ENCODE measurements at regions of chr10 and their contacts with region 1.

Region 1: GRCh38 chr10:127906548-127907377 is at the start of gene PTPRE:
- DNase-seq: peak in 34 of 35 experiments; percentile 18 to 74 (median 48)
- ATAC-seq: peak; percentile 92 to 99 (median 96)
- H3K4me3 ChIP-seq: peak within 1 kb of the TSS in 1 of 2 donors; percentile 57
- H3K4me3 Mint-ChIP-seq: peak within 1 kb of the TSS; percentile 34 to 50 (median 49)
- H3K27ac ChIP-seq: no peak within 1 kb of the TSS
- H3K27ac Mint-ChIP-seq: no peak within 1 kb of the TSS
- H3K4me1 ChIP-seq: peaks cover 0 to 9% of the 10 kb centered on the region in 2 experiments
- H3K4me1 Mint-ChIP-seq: no peaks in the 10 kb centered on the region
- H3K27me3 ChIP-seq: peaks cover 0 to 42% of the 10 kb centered on the region in 2 experiments
- H3K27me3 Mint-ChIP-seq: peaks cover 20 to 42% of the 10 kb centered on the region in 2 donors
- total RNA-seq, gene PTPRE: 23.2 to 69.2 (median 32.2) TPM

Region 2: DNA sequence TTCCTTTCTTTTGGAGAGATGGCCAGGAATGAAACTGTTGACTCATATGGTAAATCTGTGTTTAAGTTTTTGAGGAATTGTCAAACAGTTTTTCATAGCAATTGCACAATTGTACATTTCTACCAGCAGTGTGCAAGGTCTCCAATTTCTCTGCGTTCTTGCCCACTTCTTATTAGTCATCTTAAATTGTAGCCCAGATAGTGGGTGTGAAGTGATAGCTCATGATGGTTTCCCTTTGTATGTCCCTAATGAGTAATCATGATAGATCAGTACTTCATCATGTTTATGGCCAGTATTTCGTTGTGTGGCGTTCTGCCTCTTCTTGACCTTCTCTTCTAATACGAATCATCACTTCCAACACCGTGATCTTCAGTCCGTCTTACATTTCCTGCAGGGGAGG is 865.2 kb before region 1 on chr10:
- CTCF ChIA-PET with region 1: no interaction called
- POLR2A ChIA-PET with region 1: no interaction called
- DNase-seq: no peak
- ATAC-seq: no peak
- H3K4me3 ChIP-seq: no peak overlapping the region
- H3K4me3 Mint-ChIP-seq: no peak overlapping the region
- H3K27ac ChIP-seq: no peak overlapping the region
- H3K27ac Mint-ChIP-seq: no peak overlapping the region
- H3K4me1 ChIP-seq: no peaks in the 10 kb centered on the region
- H3K4me1 Mint-ChIP-seq: no peaks in the 10 kb centered on the region
- H3K27me3 ChIP-seq: no peaks in the 10 kb centered on the region
- H3K27me3 Mint-ChIP-seq: no peaks in the 10 kb centered on the region

Region 3: DNA sequence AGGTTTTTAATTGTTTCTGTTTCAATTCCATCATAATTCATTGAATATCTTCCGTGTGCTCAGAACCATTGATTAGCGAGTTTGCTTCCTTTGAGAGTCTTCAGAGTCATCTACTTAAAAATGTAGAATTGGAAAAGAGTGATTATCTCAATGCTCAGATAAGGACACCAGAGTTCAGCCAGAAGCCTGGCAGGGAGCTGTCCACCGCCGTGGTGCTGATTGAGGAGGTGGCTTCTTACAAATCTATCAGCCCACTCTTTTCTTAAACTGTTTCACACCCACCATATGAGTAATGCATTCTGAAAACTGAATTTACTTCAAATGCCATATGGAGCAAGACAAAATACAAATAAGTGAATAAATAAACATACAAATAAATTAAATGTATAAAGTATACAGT is 789.6 kb before region 1 on chr10:
- CTCF ChIA-PET with region 1: no interaction called
- POLR2A ChIA-PET with region 1: no interaction called
- DNase-seq: peak in 10 of 35 experiments; percentile 1 to 27 (median 10)
- ATAC-seq: no peak
- H3K4me3 ChIP-seq: no peak overlapping the region
- H3K4me3 Mint-ChIP-seq: no peak overlapping the region
- H3K27ac ChIP-seq: no peak overlapping the region
- H3K27ac Mint-ChIP-seq: no peak overlapping the region
- H3K4me1 ChIP-seq: peaks cover 0 to 3% of the 10 kb centered on the region in 2 experiments
- H3K4me1 Mint-ChIP-seq: no peaks in the 10 kb centered on the region
- H3K27me3 ChIP-seq: peaks cover 0 to 2% of the 10 kb centered on the region in 2 experiments
- H3K27me3 Mint-ChIP-seq: peaks cover 0 to 15% of the 10 kb centered on the region in 2 donors

Region 4: DNA sequence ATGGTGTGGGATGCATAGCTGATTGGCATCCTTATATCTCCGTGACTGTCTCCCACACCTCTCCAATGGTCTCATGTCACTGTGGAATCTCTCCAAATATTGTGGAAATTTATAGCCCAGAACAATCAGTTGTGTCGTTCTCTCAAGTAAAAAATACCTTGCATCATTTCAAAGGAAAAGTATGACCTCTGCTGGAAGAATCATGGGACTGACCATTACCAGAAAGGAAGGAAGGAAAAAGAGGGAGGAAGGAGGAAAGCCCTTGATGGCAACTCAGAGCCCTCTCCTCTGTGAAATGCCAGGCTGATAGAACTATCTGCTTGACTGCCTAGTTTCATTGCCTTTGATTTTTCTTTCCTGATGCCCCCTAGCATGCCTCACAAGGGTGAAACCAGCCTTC is 93.5 kb before region 1 on chr10:
- CTCF ChIA-PET with region 1: no interaction called
- POLR2A ChIA-PET with region 1: no interaction called
- DNase-seq: no peak
- ATAC-seq: no peak
- H3K4me3 ChIP-seq: no peak overlapping the region
- H3K4me3 Mint-ChIP-seq: no peak overlapping the region
- H3K27ac ChIP-seq: no peak overlapping the region
- H3K27ac Mint-ChIP-seq: no peak overlapping the region
- H3K4me1 ChIP-seq: no peaks in the 10 kb centered on the region
- H3K4me1 Mint-ChIP-seq: no peaks in the 10 kb centered on the region
- H3K27me3 ChIP-seq: no peaks in the 10 kb centered on the region
- H3K27me3 Mint-ChIP-seq: peaks cover 0 to 12% of the 10 kb centered on the region in 2 donors

Region 5: DNA sequence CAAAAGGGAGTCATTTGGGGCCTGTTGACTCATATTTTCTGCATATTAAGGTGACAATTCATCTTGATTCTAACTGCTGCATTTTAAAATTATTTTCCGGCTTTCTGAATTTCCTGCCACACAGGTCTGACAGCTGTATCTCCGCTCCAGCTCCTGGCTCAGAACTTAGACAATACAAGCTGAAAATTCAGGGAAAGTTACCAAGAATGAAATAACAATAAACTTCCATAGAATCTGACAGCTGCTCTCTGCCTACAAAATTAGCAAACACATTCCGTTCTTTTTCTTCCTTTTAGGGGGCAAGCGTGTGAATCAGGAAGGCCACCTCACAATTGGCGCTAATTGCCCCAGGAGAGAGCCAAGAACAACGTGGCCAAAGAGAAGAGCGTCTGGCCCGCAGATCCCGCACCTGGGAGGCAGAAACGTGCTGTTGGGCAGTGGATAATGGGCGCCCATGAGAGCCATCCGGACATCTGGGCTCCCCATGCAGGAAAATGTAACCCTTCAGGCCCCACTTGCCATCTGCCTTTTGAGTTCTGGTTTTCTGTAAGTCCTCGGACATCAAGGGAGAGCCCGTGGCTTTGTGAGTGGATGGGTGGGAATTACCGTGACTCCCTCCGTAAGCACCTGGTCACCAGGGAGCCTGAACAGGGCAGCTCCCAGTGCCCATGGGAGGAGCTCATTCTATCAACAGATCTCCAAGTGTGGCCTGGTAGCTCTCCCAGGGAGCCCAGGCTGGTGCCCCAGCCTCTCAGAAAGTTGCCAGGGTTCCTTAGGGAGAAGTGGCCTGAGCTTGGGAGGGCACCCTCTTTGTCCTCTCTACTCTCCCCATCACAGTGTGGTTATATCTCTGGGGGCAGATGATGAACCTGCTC is 19.0 kb before region 1 on chr10:
- CTCF ChIA-PET with region 1: no interaction called
- POLR2A ChIA-PET with region 1: no interaction called
- DNase-seq: no peak
- ATAC-seq: no peak
- H3K4me3 ChIP-seq: no peak overlapping the region
- H3K4me3 Mint-ChIP-seq: no peak overlapping the region
- H3K27ac ChIP-seq: no peak overlapping the region
- H3K27ac Mint-ChIP-seq: no peak overlapping the region
- H3K4me1 ChIP-seq: no peaks in the 10 kb centered on the region
- H3K4me1 Mint-ChIP-seq: no peaks in the 10 kb centered on the region
- H3K27me3 ChIP-seq: peaks cover 0 to 8% of the 10 kb centered on the region in 2 experiments
- H3K27me3 Mint-ChIP-seq: peaks cover 0 to 20% of the 10 kb centered on the region in 2 donors

Region 6: DNA sequence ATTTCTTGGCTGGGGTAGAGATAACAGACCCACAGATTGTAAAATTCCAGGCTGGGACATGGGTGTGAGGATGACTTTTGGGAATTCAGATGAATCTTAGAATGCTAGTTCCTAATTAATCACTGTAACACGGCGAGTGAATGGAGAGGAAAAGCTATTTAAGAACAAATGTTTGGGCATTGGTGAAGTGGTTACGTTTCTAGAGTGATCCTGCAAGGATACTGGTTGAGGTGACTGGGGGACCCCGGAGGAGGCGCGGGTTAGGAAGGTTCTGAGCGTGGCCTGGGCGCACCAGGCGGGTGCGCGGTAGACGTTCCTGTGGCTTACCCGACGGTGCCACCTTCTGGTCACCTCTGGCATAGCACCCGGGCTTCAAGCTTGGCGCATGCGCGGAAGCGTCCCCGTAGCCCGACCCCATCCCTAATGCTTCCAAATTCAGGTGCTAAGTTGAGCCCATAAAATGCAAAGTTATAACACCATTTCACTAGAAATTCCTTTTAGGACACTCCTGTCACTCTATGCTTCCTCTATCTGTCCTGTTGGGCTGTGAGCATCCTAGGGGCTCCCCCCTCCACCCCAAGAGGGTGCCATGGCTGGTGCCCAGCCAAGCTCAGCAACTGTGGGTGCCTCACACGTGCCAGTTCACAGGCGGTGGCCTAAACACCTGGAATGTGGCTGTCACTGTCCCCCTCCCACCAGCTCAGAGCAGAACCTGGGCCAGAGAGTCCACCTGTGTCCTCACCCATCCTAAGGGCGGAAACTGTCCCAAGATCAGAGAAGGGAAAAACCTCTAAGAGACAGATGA is 104.6 kb after region 1 on chr10:
- CTCF ChIA-PET with region 1: interaction called, 7 to 20 read pairs
- POLR2A ChIA-PET with region 1: no interaction called
- DNase-seq: peak; percentile 66 to 91 (median 83)
- ATAC-seq: peak; percentile 91 to 97 (median 92)
- H3K4me3 ChIP-seq: no peak overlapping the region
- H3K4me3 Mint-ChIP-seq: peak overlapping the region in 1 of 3 donors; percentile 34
- H3K27ac ChIP-seq: no peak overlapping the region
- H3K27ac Mint-ChIP-seq: peak overlapping the region in 1 of 2 donors; percentile 16
- H3K4me1 ChIP-seq: peaks cover 2 to 8% of the 10 kb centered on the region in 2 experiments
- H3K4me1 Mint-ChIP-seq: peaks cover 5 to 8% (median 8%) of the 10 kb centered on the region in 3 donors
- H3K27me3 ChIP-seq: peaks cover 0 to 26% of the 10 kb centered on the region in 2 experiments
- H3K27me3 Mint-ChIP-seq: peaks cover 10 to 11% of the 10 kb centered on the region in 2 donors

Region 7: DNA sequence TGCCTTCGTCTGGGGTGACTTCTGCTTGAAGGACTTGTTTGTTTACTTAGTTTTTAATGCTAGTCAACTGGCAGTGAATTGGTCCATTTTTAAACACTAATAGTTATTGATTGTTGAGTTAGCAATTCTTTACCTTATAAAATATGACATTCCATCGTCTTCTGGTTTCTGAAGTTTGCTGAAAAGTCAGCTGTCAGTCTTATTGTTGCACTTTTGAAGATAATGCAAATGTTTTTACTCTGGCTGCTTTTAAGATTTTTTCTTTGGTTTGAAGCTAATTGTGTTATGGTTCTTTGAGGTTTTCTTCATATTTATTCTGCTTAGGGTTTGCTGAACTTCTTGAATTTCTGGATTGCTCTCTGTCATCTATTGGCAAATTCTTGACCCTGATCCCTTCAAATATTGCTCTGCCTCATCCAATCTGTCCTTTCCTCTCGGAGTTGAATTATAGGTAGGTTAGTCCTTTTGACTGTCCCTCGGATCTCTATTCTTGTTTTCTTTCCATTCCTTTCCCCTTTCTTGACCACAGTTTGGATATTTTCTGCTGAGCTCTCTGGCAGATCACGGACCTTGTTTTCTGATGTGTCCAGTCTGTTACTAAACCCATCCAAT is 1584.5 kb after region 1 on chr10:
- CTCF ChIA-PET with region 1: interaction called in 1 of 2 experiments, 10 read pairs
- POLR2A ChIA-PET with region 1: no interaction called
- DNase-seq: no peak
- ATAC-seq: no peak
- H3K4me3 ChIP-seq: no peak overlapping the region
- H3K4me3 Mint-ChIP-seq: no peak overlapping the region
- H3K27ac ChIP-seq: no peak overlapping the region
- H3K27ac Mint-ChIP-seq: no peak overlapping the region
- H3K4me1 ChIP-seq: peaks cover 0 to 6% of the 10 kb centered on the region in 2 experiments
- H3K4me1 Mint-ChIP-seq: peaks cover 11 to 14% (median 14%) of the 10 kb centered on the region in 3 donors
- H3K27me3 ChIP-seq: no peaks in the 10 kb centered on the region
- H3K27me3 Mint-ChIP-seq: no peaks in the 10 kb centered on the region

Measured in T-cell (primary cell).